Activated T-helper 2 cell treated with anti-CD3 and anti-CD28 coated beads, Interferon-gamma antibody, Interleukin-2, Interleukin-4, amounts not matched to agents 10 μg/mL and 5 μg/mL and 100 μg/mL, durations not matched to agents 14 hours and 24 hours and 36 hours (primary cell): ENCODE measurements at regions of chr9 and their contacts with region 1.

Region 1: GRCh38 chr9:21995177-21996086 is 841 bp downstream of the CDKN2B-AS1 start:
- DNase-seq: peak; percentile 82
- H3K4me3 Mint-ChIP-seq: peak overlapping the region; percentile 91
- H3K27ac Mint-ChIP-seq: peak overlapping the region; percentile 81
- H3K4me1 Mint-ChIP-seq: peaks cover 27% of the 10 kb centered on the region
- H3K27me3 Mint-ChIP-seq: peaks cover 38% of the 10 kb centered on the region

Region 2: DNA sequence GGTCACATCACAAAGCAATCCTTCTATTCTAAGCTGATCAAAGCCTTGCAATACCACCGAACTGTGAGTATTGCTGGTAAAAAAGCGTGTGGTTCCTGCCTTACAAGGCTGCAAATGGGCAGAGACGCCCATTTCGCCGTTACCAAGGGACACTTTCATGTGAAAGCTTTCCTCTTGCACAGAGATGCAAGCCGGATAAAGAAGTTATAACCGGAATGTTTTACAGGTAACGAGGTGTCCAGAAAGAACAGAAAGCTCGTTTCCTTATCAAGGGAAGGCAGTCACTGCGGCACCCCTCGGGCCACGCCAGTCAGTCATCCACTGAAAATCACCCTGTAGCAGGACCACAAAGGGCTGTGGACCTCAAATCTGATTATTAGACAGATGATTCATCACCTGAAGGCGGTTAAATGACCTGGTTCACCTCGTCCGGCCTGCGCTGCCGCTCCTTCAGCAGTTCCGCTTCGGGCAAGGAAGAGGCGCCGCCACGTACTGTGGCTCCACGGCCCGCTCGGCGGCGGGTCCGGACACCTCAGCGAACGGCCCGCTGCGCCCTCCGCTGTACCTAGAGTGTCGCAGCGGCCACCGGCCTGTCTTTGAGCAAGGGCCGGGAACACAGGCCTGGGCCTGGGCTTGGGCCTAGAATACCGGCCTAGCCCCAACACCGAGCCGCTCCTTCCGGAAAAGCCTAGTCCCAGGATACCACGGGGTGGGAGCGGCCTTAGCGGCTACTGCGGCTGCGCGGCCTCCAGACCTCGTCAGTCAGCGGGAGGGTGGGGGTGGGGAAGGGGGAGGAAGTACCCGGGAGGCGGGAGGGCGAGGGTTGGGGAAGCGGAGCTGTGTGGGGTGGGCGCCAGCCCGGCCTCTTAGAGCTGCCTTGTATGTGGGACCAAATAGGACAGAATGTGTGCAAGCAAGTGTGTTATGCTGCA is 660.5 kb before region 1 on chr9 and contains the start of gene KLHL9:
- intact Hi-C with region 1: loop called (anchors 10 kb)
- DNase-seq: peak; percentile 81
- H3K4me3 Mint-ChIP-seq: peak within 1 kb of the TSS; percentile 88
- H3K27ac Mint-ChIP-seq: peak within 1 kb of the TSS; percentile 83
- H3K4me1 Mint-ChIP-seq: peaks cover 36% of the 10 kb centered on the region
- H3K27me3 Mint-ChIP-seq: peaks cover 5% of the 10 kb centered on the region
- total RNA-seq, gene KLHL9: 14.3 and 15.8 TPM in 2 replicates

Region 3: DNA sequence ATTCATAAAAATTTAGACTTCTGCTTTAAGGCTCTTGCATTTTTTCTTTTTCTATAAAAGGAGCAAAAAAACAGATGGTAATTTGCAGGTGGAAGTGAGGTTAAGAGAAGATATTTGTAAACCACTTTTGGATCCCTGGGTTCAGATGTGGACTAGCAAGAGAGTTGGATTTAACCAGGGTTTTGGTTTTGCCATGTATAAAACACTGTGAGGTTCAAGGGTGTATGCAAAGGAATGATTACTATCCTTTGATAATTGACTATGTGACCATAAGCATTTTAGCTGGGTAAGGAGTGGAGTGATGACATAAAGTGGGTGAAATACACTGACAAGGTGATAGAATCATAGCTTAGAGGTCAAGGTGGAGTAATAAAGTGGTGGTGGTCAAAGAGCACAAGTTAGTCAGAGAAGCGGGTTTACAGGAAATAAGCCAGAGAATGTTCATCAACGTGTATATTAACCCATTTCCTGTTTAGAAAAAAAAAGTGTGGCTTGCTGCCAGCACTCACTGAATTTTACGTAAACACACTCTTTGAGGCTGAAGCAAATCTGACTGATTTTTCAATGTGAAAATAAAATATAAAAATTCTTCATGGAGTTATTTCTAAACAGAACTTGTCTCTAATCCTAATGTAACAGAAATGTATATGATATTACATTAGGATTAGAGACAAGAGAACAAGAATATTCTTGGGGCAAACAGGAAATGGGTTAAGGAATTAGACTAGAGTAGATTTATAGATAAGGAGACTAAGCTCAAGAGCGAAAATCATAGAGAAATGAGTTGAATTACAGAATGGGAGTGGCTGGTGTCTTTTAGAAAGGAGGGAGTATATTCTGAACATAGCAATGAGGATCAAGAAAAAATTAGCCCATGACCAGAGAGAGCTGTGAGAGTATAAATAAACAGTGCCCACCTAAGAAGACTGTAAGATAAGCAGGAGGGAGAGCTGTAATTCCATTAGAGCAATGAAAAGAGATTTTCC is 75.8 kb before region 1 on chr9:
- intact Hi-C with region 1: loop called (anchors 5 kb)
- DNase-seq: peak; percentile 14
- H3K4me3 Mint-ChIP-seq: peak overlapping the region; percentile 47
- H3K27ac Mint-ChIP-seq: peak overlapping the region; percentile 68
- H3K4me1 Mint-ChIP-seq: peaks cover 33% of the 10 kb centered on the region
- H3K27me3 Mint-ChIP-seq: no peaks in the 10 kb centered on the region

Region 4: GRCh38 chr9:21974548-21975409 is 20.7 kb before region 1 on chr9:
- intact Hi-C with region 1: loop called (anchors 1 kb)
- DNase-seq: no peak
- H3K4me3 Mint-ChIP-seq: peak overlapping the region; percentile 83
- H3K27ac Mint-ChIP-seq: peak overlapping the region; percentile 50
- H3K4me1 Mint-ChIP-seq: peaks cover 22% of the 10 kb centered on the region
- H3K27me3 Mint-ChIP-seq: peaks cover 87% of the 10 kb centered on the region

Region 5: DNA sequence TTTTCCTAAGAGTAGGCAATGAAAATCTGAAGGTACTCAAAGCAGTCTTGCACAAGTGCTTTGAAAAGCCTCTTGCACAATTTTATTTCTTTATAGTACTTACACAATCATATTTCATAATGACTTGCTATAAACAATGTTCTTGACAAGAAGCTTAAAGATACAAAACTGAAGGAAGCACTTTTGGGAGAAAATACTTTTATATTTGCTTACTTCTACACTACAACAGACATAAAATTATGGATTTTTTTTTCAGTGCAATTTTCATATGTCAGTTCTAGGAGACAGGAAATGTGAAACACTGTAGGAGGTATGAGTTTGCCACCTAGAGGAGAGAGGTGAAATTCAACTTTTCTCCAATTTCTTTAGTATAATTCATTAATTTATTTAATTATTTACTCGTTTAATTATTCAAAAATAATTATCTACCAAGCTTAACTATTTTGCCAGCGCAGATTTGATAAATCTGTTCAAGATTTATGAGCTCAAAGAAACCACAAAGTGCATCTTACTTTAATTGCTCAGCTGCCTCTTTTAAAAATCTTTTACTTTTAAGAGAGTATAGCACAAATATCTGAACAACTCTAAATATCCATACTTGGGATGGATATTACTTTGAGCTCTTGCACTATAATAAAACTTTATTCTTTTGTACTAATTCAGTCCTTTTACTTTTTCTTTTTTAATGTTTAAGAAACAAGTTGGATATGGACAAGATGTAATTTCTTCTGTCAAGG is 42.7 kb after region 1 on chr9:
- intact Hi-C with region 1: loop called (anchors 5 kb)
- DNase-seq: no peak
- H3K4me3 Mint-ChIP-seq: no peak overlapping the region
- H3K27ac Mint-ChIP-seq: no peak overlapping the region
- H3K4me1 Mint-ChIP-seq: peaks cover 46% of the 10 kb centered on the region
- H3K27me3 Mint-ChIP-seq: peaks cover 26% of the 10 kb centered on the region

Region 6: DNA sequence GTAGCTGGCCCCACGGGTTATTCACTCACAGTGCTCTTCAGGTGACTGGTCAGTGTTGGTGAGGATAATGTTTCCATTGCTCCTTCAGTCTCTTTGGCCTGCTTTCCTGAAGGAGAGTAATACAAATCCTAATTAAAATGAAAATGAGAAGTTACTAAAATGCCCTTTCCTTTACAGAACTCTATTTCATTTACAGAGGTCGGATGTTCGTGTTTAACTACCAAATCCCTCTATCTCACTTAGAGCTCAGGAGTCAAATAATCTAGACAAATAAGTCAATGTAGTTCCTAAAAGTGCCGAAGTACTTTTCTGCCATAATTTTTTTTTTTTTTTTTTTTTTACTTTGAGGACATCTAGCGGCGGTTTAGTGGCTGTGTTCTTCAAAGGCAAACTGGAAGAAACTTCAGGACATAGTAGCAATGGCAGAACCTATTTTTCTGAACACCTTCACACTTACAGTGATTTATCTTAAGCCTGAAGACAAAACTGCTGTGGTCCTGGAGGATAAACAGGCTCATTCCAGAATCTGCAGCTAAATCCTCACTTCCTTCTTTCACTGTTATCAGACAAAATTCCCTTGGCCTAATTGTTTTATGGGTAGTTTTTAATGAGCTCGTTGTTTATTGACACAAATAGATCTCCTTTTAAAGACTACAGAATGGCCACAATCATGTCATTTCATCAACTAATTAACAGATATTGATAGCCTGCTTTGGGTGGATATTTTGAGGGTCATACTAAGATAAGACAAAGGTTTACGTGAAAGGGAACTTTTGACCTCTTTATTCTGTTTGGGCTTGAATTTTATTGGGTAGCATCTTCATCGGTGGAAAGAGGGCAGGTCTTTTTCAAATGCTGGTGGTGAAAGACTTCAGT is 243.6 kb after region 1 on chr9:
- intact Hi-C with region 1: loop called (anchors 5 kb)
- DNase-seq: no peak
- H3K4me3 Mint-ChIP-seq: no peak overlapping the region
- H3K27ac Mint-ChIP-seq: no peak overlapping the region
- H3K4me1 Mint-ChIP-seq: peaks cover 52% of the 10 kb centered on the region
- H3K27me3 Mint-ChIP-seq: peaks cover 41% of the 10 kb centered on the region